Dorsolateral prefrontal cortex (tissue), 120 donors: ENCODE measurements at regions of chr17 and their contacts with region 1.

Region 1: GRCh38 chr17:30477083-30477773 is at the start of gene GOSR1:
- DNase-seq: peak; percentile 87 to 97 (median 95)
- H3K4me3 ChIP-seq: peak within 1 kb of the TSS; percentile 66 to 98 (median 89)
- H3K27ac ChIP-seq: peak within 1 kb of the TSS; percentile 64 to 98 (median 91)
- H3K27me3 ChIP-seq: no peaks in the 10 kb centered on the region
- CTCF ChIP-seq: peak; percentile 81 to 95 (median 90)
- total RNA-seq, gene GOSR1: 41.4 to 68.9 (median 57.7) TPM

Region 2: GRCh38 chr17:30339086-30339485 is 138.1 kb before region 1 on chr17:
- intact Hi-C with region 1: loop called (anchors 1 to 2 kb)
- DNase-seq: no peak
- H3K4me3 ChIP-seq: no peak overlapping the region
- H3K27ac ChIP-seq: no peak overlapping the region
- H3K27me3 ChIP-seq: no peaks in the 10 kb centered on the region
- CTCF ChIP-seq: no peak

Region 3: DNA sequence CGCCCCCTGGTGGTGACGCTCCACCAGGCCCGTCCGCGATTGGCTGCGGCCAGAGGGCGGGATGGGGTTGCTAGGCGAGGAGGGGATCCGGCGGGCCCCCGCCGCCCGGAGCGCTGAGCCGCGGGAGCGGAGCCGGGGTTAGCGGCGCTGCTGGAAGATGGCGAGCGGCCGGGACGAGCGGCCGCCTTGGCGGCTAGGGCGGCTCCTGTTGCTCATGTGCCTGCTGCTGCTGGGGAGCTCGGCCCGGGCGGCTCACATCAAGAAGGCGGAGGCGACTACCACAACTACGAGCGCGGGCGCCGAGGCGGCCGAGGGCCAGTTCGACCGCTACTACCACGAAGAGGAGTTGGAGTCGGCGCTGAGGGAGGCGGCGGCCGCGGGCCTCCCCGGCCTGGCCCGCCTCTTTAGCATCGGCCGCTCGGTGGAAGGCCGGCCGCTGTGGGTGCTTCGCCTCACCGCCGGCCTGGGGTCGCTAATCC is 98.4 kb before region 1 on chr17 and contains the start of gene CPD:
- intact Hi-C with region 1: loop called (anchors 2 to 10 kb)
- DNase-seq: peak; percentile 96 to 99 (median 98)
- H3K4me3 ChIP-seq: peak within 1 kb of the TSS; percentile 71 to 100 (median 90)
- H3K27ac ChIP-seq: peak within 1 kb of the TSS; percentile 35 to 95 (median 87)
- H3K27me3 ChIP-seq: no peaks in the 10 kb centered on the region
- CTCF ChIP-seq: peak in 45 of 56 donors; percentile 7 to 88 (median 52)
- total RNA-seq, gene CPD: 45.2 to 97.3 (median 64.6) TPM

Region 4: GRCh38 chr17:30716461-30717300 is 239.5 kb after region 1 on chr17:
- intact Hi-C with region 1: loop called in 1 of 2 experiments (anchors 10 kb)
- DNase-seq: peak in 5 of 10 donors; percentile 8 to 39 (median 37)
- H3K4me3 ChIP-seq: no peak overlapping the region
- H3K27ac ChIP-seq: peak overlapping the region in 5 of 59 donors; percentile 8 to 65 (median 21)
- H3K27me3 ChIP-seq: no peaks in the 10 kb centered on the region
- CTCF ChIP-seq: peak in 19 of 56 donors; percentile 9 to 26 (median 17)